Ovary (tissue), 10 donors: ENCODE measurements at regions of chr6 and their contacts with region 1.

Region 1: GRCh38 chr6:30935018-30935417 is 3.0 kb upstream of the SFTA2 start:
- DNase-seq: no peak
- H3K4me3 ChIP-seq: no peak overlapping the region
- H3K27ac ChIP-seq: no peak overlapping the region
- H3K4me1 ChIP-seq: no peaks in the 10 kb centered on the region
- H3K27me3 ChIP-seq: no peaks in the 10 kb centered on the region
- CTCF ChIP-seq: no peak
- EP300 ChIP-seq: no peak
- POLR2A ChIP-seq: no peak

Region 2: GRCh38 chr6:31058128-31058894 is 123.3 kb after region 1 on chr6:
- intact Hi-C with region 1: loop called in 1 of 4 experiments (anchors 10 kb)
- DNase-seq: no peak
- H3K4me3 ChIP-seq: no peak overlapping the region
- H3K27ac ChIP-seq: no peak overlapping the region
- H3K4me1 ChIP-seq: no peaks in the 10 kb centered on the region
- H3K27me3 ChIP-seq: no peaks in the 10 kb centered on the region
- CTCF ChIP-seq: peak in 1 of 3 donors; percentile 12
- EP300 ChIP-seq: no peak
- POLR2A ChIP-seq: no peak